AG04449 (cell line): ENCODE measurements at regions of chr2 and their contacts with region 1.

Region 1: DNA sequence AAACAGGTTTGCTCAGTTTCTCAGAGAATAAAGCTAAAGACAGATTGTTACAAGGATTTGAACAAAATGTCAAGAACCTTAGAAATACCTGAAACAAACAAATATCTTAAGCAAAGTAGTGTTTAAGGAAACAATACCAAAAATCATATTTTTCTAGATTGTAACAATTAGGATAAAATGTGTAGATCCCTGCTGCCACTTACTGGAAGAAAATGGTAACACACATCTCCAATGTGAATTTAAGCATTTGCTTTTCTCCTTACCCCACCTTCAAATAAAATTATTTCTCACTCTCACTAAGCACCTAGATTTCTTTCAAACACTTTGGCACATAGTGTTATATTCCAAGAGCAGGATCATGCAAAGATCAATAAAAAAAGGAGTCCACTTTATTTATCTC is 34.9 kb downstream of the SUCLG1 start:
- DNase-seq: no peak
- H3K4me3 ChIP-seq: no peak overlapping the region
- CTCF ChIP-seq: peak; percentile 40

Region 2: GRCh38 chr2:84022810-84023431 is 401.2 kb before region 1 on chr2:
- CTCF ChIA-PET with region 1: interaction called, 10 read pairs
- POLR2A ChIA-PET with region 1: no interaction called
- DNase-seq: peak; percentile 12
- H3K4me3 ChIP-seq: no peak overlapping the region
- CTCF ChIP-seq: peak; percentile 64